Panc1 (cell line): ENCODE measurements at regions of chr21 and their contacts with region 1.

Region 1: GRCh38 chr21:46475296-46475695 is 16.6 kb downstream of the DIP2A start:
- DNase-seq: no peak
- ATAC-seq: no peak
- H3K4me3 ChIP-seq: no peak overlapping the region
- H3K27ac ChIP-seq: no peak overlapping the region
- H3K4me1 ChIP-seq: no peaks in the 10 kb centered on the region
- H3K27me3 ChIP-seq: no peaks in the 10 kb centered on the region
- CTCF ChIP-seq: no peak

Region 2: DNA sequence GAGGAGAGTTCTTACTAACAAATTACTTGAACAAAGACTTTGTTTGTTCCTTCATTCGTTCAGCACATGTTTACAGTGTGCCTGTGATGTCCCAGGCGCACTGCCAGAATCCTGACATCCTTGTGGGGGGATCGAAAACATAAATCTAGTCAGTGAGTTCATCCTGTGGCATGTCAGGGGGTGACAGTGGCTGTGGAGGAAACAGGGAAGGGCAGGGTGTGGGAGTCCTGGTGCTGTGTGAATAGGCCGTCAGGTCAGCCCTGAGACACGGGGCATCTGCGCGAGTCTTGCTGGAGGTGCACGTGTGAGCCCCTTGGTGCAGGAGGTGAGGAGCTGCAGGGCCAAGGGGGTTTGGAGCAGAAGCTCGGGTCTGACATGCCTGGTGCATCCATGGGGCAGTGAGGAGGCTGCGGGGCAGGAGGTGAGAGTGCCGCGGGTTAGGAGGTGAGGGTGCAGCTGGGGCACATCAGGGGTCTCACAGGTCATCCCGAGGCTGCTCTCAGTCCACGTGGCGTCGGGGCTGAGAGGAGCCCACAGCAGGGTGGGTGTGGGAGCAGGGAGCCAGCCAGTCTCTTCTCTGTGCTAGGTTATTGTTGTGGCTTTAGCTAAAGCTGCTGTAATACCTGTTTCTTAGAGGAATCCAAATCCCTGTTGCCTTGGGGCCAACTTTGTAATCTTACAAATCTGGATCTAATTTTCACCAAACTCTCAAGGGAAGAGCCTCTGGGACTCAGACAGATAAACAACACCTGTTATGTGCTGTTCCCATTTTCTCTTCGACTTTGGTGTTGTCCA is 738.4 kb before region 1 on chr21:
- CTCF ChIA-PET with region 1: no interaction called
- POLR2A ChIA-PET with region 1: no interaction called
- in situ Hi-C with region 1: no loop called
- intact Hi-C with region 1: no loop called
- DNase-seq: no peak
- ATAC-seq: no peak
- H3K4me3 ChIP-seq: no peak overlapping the region
- H3K27ac ChIP-seq: no peak overlapping the region
- H3K4me1 ChIP-seq: no peaks in the 10 kb centered on the region
- H3K27me3 ChIP-seq: no peaks in the 10 kb centered on the region
- CTCF ChIP-seq: no peak

Region 3: GRCh38 chr21:46500224-46500856 is 25.0 kb after region 1 on chr21:
- CTCF ChIA-PET with region 1: no interaction called
- POLR2A ChIA-PET with region 1: interaction called, 10 read pairs
- in situ Hi-C with region 1: no loop called
- intact Hi-C with region 1: no loop called
- DNase-seq: no peak
- ATAC-seq: no peak
- H3K4me3 ChIP-seq: no peak overlapping the region
- H3K27ac ChIP-seq: no peak overlapping the region
- H3K4me1 ChIP-seq: peaks cover 5% of the 10 kb centered on the region
- H3K27me3 ChIP-seq: no peaks in the 10 kb centered on the region
- CTCF ChIP-seq: no peak